ENCODE measurements at regions of chr17 and their contacts with region 1.

Region 1: DNA sequence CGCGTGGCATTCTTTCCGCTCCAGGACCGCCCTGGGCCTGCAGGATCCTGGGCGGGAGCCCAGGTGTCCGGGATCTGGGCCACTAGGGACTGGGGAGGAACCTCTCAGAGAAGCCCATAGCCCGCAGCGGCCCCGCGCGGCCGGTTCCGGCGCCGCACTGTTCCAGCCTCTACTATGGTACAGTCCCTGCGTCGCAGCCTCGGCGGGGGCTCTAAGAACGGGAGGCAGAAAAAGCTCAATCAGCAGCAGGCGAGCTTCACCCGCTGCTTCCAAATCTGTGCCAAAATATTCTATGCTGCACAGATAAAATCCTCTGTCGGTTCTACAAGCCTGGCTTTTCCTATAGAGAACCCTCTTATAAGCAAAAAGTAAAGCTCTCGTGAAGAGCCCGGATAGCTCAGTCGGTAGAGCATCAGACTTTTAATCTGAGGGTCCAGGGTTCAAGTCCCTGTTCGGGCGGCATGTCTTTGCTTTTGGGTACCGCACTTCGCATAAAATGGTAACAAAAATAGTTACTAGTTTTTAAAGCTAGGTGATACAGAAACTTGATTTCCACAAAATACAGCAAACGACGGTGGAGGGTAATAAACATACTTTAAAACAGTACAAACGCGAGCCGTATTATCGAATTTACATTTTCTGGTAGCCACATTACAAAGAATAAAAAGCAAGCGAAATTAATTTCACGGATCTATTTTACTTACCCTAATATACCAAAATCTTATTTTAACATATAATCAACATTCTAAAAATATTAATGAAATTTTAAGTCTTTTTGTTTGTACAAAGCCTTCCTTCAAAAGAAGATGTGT is 661 bp upstream of the ALOXE3 start:
- DNase-seq: peak; percentile 94
- ATAC-seq: peak; percentile 58
- H3K4me3 Mint-ChIP-seq: peak overlapping the region; percentile 90
- H3K27ac Mint-ChIP-seq: peak overlapping the region; percentile 94
- H3K4me1 Mint-ChIP-seq: peaks cover 46% of the 10 kb centered on the region
- H3K27me3 Mint-ChIP-seq: peaks cover 29% of the 10 kb centered on the region

Region 2: GRCh38 chr17:7887482-7888183 is 231.3 kb before region 1 on chr17:
- CTCF ChIA-PET with region 1: no interaction called
- POLR2A ChIA-PET with region 1: no interaction called
- intact Hi-C with region 1: loop called (anchors 2 to 5 kb)
- DNase-seq: peak; percentile 94
- ATAC-seq: peak; percentile 79
- H3K4me3 Mint-ChIP-seq: no peak overlapping the region
- H3K27ac Mint-ChIP-seq: no peak overlapping the region
- H3K4me1 Mint-ChIP-seq: peaks cover 4% of the 10 kb centered on the region
- H3K27me3 Mint-ChIP-seq: no peaks in the 10 kb centered on the region

Region 3: DNA sequence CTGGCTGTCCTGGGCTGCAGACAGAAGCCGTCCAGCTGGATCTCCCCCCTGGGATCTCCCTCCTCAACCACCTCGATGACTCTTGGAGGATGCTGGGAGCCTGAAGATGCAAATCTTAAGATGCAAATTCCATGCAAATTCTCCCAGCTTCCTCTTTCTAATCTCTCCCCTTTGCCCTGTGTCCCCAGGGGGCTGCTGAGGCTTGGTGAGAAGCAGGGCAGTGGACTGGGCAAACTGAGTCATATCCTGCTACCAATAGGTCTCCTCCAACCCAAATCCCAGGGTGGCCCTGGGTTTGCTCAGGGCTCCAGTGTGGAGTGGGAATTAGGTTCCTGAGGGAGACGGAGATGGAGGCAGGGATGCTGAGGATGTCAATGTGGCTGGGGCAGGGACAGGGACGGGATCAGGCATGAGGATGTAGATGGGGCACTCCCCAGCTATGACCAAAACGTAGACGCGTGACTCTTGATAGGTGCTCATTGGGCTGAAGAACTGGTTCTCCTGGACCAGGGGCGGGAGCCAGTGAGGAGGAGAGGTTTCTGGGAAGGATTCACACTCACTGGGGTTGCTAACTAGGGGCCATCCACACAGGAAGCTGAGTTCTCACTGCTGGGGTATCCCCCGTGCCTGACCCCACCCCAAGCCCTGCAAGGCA is 27.8 kb before region 1 on chr17:
- CTCF ChIA-PET with region 1: interaction called, 64 read pairs
- POLR2A ChIA-PET with region 1: no interaction called
- intact Hi-C with region 1: loop called (anchors 1 to 2 kb)
- DNase-seq: no peak
- ATAC-seq: no peak
- H3K4me3 Mint-ChIP-seq: no peak overlapping the region
- H3K27ac Mint-ChIP-seq: no peak overlapping the region
- H3K4me1 Mint-ChIP-seq: peaks cover 14% of the 10 kb centered on the region
- H3K27me3 Mint-ChIP-seq: peaks cover 5% of the 10 kb centered on the region

Region 4: GRCh38 chr17:8173056-8173870 is 54.3 kb after region 1 on chr17:
- CTCF ChIA-PET with region 1: interaction called, 5 read pairs
- POLR2A ChIA-PET with region 1: interaction called, 52 read pairs
- intact Hi-C with region 1: loop called in 1 of 2 experiments (anchors 1 kb)
- DNase-seq: peak; percentile 91
- ATAC-seq: peak; percentile 87
- H3K4me3 Mint-ChIP-seq: peak overlapping the region; percentile 78
- H3K27ac Mint-ChIP-seq: peak overlapping the region; percentile 96
- H3K4me1 Mint-ChIP-seq: peaks cover 40% of the 10 kb centered on the region
- H3K27me3 Mint-ChIP-seq: no peaks in the 10 kb centered on the region

Region 5: DNA sequence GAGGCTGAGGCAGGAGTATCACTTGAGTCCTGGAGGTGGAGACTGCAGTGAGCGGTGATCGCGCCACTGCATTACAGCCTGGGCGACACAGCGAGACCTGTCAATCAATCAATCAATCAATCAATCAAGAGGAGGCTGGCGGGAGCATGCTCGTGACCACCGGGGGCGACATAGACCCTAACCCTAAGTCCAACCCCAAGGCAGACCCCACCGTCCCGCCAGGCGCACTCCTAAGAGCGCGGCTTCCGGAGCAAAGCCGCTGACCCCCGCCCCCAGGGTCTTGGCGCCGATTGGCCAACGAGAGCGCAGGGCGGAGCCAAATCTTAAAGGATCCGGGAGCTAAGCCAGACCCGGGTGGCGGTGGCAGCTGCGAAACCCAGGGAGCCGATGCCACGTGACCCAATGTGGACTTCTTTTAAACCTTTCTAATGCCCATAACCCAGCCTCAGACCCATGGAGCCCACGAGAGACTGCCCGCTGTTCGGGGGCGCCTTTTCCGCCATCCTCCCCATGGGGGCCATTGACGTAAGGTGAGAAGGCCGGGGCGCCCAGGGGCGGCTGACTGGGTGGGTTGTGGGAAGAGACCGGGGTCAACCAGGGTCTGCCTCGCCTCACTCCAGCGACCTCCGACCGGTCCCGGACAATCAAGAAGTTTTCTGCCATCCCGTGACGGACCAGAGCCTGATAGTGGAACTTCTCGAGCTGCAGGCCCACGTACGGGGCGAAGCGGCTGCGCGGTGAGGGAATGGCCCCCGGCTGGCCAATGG is 169.5 kb after region 1 on chr17 and contains the start of gene RANGRF:
- CTCF ChIA-PET with region 1: no interaction called
- POLR2A ChIA-PET with region 1: no interaction called
- intact Hi-C with region 1: loop called (anchors 1 to 2 kb)
- DNase-seq: peak; percentile 91
- ATAC-seq: peak; percentile 94
- H3K4me3 Mint-ChIP-seq: peak within 1 kb of the TSS; percentile 84
- H3K27ac Mint-ChIP-seq: peak within 1 kb of the TSS; percentile 93
- H3K4me1 Mint-ChIP-seq: peaks cover 20% of the 10 kb centered on the region
- H3K27me3 Mint-ChIP-seq: no peaks in the 10 kb centered on the region
- total RNA-seq, gene RANGRF: 37.9 to 40.1 TPM

Region 6: DNA sequence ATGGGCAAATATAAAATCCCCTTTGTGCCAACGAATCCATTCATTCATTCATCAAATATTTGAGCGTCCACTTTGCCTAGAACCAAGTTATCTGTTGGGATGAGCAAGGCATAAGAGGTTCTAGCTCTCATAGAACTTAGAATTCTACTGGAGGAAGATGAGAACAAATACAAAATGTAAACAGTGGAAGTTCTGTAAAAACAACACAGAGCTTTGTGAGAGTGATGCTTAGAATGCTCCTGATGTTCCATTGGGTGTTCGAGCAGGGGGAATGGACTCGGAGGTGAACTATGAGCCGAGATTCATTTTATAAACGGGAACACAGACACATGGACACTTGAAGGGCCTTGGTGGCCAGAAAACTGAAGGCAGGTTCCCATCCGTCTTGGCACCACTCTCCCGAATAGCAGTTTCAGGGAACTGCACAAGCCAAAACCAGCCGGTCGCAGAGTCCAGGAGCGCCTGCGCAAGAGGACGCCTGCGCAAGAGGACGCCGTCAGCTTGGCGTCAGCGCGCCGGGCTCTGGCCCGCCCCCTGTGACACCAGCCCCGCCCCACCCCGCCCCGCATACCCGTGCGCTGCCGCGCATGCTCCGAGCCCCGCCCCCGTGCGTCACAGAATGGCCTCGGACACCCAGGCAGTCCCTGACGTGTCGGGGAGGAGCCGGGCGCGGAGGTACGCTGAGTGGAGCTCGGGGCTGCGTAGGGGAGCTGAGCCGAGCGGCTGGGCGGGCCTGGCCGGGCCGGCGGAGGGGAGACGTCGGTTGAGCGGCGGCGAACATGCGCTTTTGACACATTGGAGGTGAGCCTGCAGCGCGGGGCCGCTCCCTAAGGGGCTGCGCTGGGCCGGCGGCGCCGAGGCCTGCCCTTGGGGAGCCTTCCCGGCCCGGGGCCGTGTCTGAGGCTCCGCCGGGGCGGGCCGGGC is 316.5 kb after region 1 on chr17 and contains the start of gene NDEL1:
- CTCF ChIA-PET with region 1: no interaction called
- POLR2A ChIA-PET with region 1: no interaction called
- intact Hi-C with region 1: loop called in 1 of 2 experiments (anchors 5 kb)
- DNase-seq: peak; percentile 100
- ATAC-seq: peak; percentile 98
- H3K4me3 Mint-ChIP-seq: peak within 1 kb of the TSS; percentile 87
- H3K27ac Mint-ChIP-seq: peak within 1 kb of the TSS; percentile 91
- H3K4me1 Mint-ChIP-seq: peaks cover 29% of the 10 kb centered on the region
- H3K27me3 Mint-ChIP-seq: no peaks in the 10 kb centered on the region
- total RNA-seq, gene NDEL1: 51.9 to 58.6 TPM

Measured in activated CD4-positive, alpha-beta T cell treated with anti-CD3 and anti-CD28 coated beads for 36 hours (primary cell).